Naive thymus-derived CD4-positive, alpha-beta T cell (primary cell): ENCODE measurements at regions of chr10 and their contacts with region 1.

Region 1: DNA sequence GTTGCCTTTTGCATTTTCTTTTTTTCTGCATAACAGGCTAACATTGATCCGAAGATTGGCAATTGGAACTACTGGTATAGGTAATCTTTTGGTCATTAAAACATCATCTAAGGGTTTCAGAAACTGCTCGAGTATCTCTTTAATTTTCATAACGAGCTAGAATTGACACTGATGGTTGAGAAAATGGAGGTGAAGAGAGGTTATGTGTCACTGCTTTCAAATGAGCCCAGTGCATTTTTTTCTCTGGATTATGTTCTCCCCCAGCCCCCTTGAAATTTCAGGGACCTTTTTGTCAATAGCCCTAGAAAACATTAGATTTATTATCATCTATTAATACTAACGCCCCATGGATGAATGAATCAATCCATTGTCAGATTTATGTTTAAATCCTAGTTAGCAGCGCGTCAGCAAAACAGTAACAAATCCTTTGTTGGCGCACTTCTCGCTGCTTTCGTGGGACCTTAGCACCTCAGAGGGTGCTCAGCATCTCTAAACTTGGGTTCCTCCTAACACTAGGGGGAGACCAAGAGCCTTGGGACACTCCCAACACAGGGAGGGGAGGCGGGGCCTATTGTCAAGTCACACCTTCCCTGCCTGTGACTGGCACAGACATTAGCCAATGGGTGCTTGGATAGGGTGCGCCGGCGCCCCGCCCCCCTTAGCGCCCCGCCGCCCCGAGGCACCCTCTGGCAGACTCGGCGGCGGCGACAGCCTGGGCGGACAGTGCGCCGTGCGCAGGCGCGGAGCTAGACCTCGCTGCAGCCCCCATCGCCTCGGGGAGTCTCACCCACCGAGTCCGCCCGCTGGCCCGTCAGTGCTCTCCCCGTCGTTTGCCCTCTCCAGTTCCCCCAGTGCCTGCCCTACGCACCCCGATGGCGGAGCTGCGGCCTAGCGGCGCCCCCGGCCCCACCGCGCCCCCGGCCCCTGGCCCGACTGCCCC is at the start of gene SUFU:
- DNase-seq: peak; percentile 91 to 99 (median 98)
- ATAC-seq: peak; percentile 85
- H3K4me3 ChIP-seq: peak within 1 kb of the TSS; percentile 92
- H3K4me3 Mint-ChIP-seq: no peak within 1 kb of the TSS
- H3K27ac ChIP-seq: peak within 1 kb of the TSS; percentile 88
- H3K27ac Mint-ChIP-seq: peak within 1 kb of the TSS in 7 of 9 donors; percentile 78 to 95 (median 83)
- H3K4me1 ChIP-seq: peaks cover 19 to 29% of the 10 kb centered on the region in 2 donors
- H3K4me1 Mint-ChIP-seq: peaks cover 22 to 49% (median 41%) of the 10 kb centered on the region in 7 donors
- H3K27me3 ChIP-seq: no peaks in the 10 kb centered on the region
- H3K27me3 Mint-ChIP-seq: no peaks in the 10 kb centered on the region
- total RNA-seq, gene SUFU: 10.7 to 17.5 (median 16.1) TPM

Region 2: DNA sequence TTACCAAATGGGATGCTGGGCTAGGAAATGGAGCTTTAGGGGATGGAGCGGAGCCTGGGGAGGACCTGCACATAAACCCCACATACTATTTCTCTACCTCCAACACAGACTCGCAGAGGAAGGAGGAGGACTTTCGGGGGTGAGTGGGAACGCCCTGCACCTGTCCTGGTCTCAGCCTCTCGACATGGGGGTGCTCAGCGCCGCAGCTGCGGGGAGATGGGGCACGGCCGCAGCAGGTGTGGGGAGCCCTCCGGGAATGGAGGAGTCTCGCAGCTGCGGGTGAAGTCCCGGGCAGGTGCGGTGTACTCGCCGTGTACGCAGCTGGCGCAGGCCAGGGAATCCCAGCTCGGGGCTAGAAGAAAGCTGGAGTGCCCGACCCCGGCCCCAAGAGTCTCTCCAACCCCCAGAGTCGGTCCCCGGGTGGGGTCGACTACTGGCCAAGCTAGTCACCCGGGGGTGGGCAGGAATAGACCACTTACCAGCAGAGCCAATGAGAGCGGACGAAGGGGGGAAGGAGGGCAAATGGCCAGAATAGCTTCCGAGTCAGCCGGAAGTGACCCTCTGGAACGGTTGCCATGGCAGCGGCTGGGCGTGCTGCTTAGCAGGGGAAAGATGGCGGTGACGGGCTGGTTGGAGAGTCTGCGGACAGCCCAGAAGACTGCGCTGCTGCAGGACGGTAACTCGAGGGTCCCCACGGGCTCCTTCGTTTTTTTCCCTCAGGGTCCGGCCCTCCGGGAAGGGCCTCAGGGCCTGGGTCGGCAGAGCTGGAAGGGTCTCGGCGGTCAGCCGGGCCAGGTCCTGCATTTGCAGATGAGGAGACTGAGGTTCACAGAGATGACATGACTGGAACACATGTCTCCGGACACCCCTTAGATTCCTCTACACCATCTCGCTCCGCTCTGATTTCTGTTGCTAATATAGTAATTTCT is 915.6 kb before region 1 on chr10 and contains the starts of genes DPCD and POLL:
- CTCF ChIA-PET with region 1: no interaction called
- POLR2A ChIA-PET with region 1: interaction called, 3 read pairs
- intact Hi-C with region 1: loop called in 1 of 2 experiments (anchors 2 kb)
- DNase-seq: peak; percentile 73 to 89 (median 81)
- ATAC-seq: peak; percentile 94
- H3K4me3 ChIP-seq: peak within 1 kb of the TSS; percentile 77
- H3K4me3 Mint-ChIP-seq: peak within 1 kb of the TSS; percentile 92 to 97 (median 95)
- H3K27ac ChIP-seq: peak within 1 kb of the TSS; percentile 69
- H3K27ac Mint-ChIP-seq: peak within 1 kb of the TSS; percentile 71 to 94 (median 89)
- H3K4me1 ChIP-seq: peaks cover 14 to 16% of the 10 kb centered on the region in 2 donors
- H3K4me1 Mint-ChIP-seq: peaks cover 16 to 37% (median 32%) of the 10 kb centered on the region in 7 donors
- H3K27me3 ChIP-seq: no peaks in the 10 kb centered on the region
- H3K27me3 Mint-ChIP-seq: no peaks in the 10 kb centered on the region
- total RNA-seq, gene DPCD: 0.64 to 3.6 (median 1.3) TPM
- total RNA-seq, gene POLL: 34.9 to 65.8 (median 38.8) TPM

Region 3: GRCh38 chr10:102114861-102115618 is 388.5 kb before region 1 on chr10:
- CTCF ChIA-PET with region 1: no interaction called
- POLR2A ChIA-PET with region 1: interaction called, 4 read pairs
- intact Hi-C with region 1: loop called (anchors 1 to 2 kb)
- DNase-seq: peak; percentile 61 to 83 (median 70)
- ATAC-seq: peak; percentile 86
- H3K4me3 ChIP-seq: peak overlapping the region; percentile 77
- H3K4me3 Mint-ChIP-seq: peak overlapping the region; percentile 84 to 97 (median 92)
- H3K27ac ChIP-seq: peak overlapping the region; percentile 97
- H3K27ac Mint-ChIP-seq: peak overlapping the region; percentile 80 to 98 (median 92)
- H3K4me1 ChIP-seq: peaks cover 49 to 58% of the 10 kb centered on the region in 2 donors
- H3K4me1 Mint-ChIP-seq: peaks cover 54 to 76% (median 67%) of the 10 kb centered on the region in 7 donors
- H3K27me3 ChIP-seq: no peaks in the 10 kb centered on the region
- H3K27me3 Mint-ChIP-seq: no peaks in the 10 kb centered on the region

Region 4: GRCh38 chr10:102235598-102235920 is 268.0 kb before region 1 on chr10:
- CTCF ChIA-PET with region 1: no interaction called
- POLR2A ChIA-PET with region 1: no interaction called
- intact Hi-C with region 1: no loop called
- DNase-seq: no peak
- ATAC-seq: no peak
- H3K4me3 ChIP-seq: no peak overlapping the region
- H3K4me3 Mint-ChIP-seq: no peak overlapping the region
- H3K27ac ChIP-seq: no peak overlapping the region
- H3K27ac Mint-ChIP-seq: no peak overlapping the region
- H3K4me1 ChIP-seq: peaks cover 0 to under 1% of the 10 kb centered on the region in 2 donors
- H3K4me1 Mint-ChIP-seq: peaks cover 0 to 8% (median 4%) of the 10 kb centered on the region in 7 donors
- H3K27me3 ChIP-seq: peaks cover 0 to 2% of the 10 kb centered on the region in 2 donors
- H3K27me3 Mint-ChIP-seq: peaks cover 27 to 74% (median 44%) of the 10 kb centered on the region in 5 donors

Region 5: DNA sequence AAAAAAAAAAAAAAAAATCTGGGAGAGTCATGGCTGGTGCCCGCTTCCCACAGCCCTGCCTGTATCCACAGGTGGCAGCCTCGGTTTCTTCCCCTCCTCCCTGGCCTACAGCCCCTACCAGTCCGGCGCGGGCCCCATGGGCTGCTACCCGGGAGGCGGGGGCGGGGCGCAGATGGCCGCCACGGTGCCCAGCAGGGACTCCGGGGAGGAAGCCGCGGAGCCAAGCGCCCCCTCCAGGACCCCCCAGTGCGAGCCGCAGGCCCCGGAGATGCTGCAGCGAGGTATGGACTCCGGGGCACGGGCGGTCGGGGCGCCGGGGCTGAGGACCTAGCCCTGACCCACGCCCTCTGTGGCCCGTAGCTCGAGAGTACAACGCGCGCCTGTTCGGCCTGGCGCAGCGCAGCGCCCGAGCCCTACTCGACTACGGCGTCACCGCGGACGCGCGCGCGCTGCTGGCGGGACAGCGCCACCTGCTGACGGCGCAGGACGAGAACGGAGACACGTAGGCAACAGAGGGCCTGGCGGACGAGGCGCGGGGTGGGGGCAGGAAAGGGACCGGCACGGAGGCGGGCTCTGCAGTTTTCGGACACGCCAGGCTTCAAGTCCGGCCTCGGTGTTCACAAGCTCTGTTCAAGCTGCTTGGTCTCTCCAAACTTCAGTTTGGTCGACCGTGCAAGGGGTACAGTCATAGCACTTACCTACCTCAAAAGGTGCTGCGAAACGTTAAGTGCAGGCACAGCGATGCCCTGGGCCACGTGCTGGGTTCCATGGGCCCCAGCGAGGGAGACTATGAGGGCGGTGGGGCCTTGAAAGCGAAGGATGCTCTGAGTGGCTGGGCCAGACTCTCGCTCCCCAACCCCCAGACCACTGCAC is 104.1 kb before region 1 on chr10:
- CTCF ChIA-PET with region 1: interaction called, 5 read pairs
- POLR2A ChIA-PET with region 1: interaction called, 12 read pairs
- intact Hi-C with region 1: loop called (anchors 1 kb)
- DNase-seq: peak; percentile 80 to 93 (median 88)
- ATAC-seq: peak; percentile 74
- H3K4me3 ChIP-seq: peak overlapping the region; percentile 56
- H3K4me3 Mint-ChIP-seq: peak overlapping the region; percentile 62 to 83 (median 76)
- H3K27ac ChIP-seq: peak overlapping the region; percentile 93
- H3K27ac Mint-ChIP-seq: peak overlapping the region; percentile 46 to 100 (median 88)
- H3K4me1 ChIP-seq: peaks cover 20 to 26% of the 10 kb centered on the region in 2 donors
- H3K4me1 Mint-ChIP-seq: peaks cover 15 to 42% (median 35%) of the 10 kb centered on the region in 7 donors
- H3K27me3 ChIP-seq: no peaks in the 10 kb centered on the region
- H3K27me3 Mint-ChIP-seq: no peaks in the 10 kb centered on the region

Region 6: DNA sequence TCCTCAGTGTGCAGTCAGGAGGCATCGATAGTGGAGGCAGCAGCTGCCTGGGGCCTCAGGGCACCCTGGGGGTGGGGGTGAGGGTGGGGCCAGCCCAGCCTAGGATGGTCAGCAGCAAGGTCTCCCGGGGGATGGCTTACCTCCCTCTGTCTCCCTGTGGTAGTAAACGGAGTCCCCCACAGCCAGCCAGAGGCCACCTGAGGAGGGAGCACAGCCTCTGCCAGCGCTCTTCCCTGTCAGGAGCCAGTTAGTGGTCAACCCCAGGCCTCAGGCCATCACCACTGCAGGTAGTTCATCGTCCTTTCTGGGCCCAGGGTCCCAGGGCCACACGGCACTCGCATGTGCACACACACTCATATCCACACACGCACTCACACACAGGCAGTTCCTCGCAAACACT is 23.2 kb before region 1 on chr10:
- CTCF ChIA-PET with region 1: no interaction called
- POLR2A ChIA-PET with region 1: interaction called, 3 read pairs
- intact Hi-C with region 1: loop called in 1 of 2 experiments (anchors 1 kb)
- DNase-seq: no peak
- ATAC-seq: no peak
- H3K4me3 ChIP-seq: no peak overlapping the region
- H3K4me3 Mint-ChIP-seq: no peak overlapping the region
- H3K27ac ChIP-seq: no peak overlapping the region
- H3K27ac Mint-ChIP-seq: no peak overlapping the region
- H3K4me1 ChIP-seq: peaks cover 0 to 4% of the 10 kb centered on the region in 2 donors
- H3K4me1 Mint-ChIP-seq: peaks cover 5 to 26% (median 15%) of the 10 kb centered on the region in 7 donors
- H3K27me3 ChIP-seq: no peaks in the 10 kb centered on the region
- H3K27me3 Mint-ChIP-seq: no peaks in the 10 kb centered on the region

Region 7: DNA sequence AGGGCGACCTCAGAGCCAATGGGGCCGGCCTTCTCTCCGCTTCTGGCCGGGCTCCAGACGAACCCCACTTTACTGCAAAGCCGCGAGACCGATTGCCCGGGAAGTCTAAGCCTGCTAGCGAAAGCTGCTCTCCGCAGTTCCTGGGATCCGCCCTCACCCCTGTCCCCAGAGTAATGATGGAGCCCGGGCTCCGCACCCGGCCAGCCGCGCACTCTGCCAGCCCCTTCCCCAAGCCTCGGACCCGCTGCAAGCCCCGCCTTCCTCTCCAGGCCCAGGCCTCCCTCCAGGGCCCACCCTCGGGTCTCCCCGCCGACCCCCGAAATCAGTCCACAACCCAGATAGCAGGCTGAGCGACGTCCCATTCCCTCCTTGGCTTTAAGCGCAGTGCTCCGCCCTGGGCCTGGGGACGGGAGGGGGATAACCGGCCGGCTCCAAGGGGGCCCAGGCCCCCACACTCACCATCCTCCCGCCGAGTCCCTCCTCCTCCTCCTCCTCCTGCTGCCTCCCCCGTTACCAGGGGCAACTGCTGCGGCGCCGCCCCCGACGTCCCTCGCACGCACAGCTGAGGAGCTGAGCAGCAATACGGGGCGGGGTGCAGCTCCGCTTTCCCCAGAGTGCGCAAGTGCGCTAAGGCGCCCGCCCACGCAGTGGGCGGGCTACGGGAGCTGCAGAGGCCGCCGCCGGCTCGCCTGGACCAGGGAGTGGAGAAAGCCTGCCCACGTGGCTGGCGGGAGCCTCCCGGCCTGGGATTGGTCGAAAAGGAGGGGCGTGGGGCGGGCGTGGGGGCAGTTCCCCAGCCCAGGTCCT is 210.5 kb after region 1 on chr10 and contains the start of gene ARL3:
- CTCF ChIA-PET with region 1: no interaction called
- POLR2A ChIA-PET with region 1: no interaction called
- intact Hi-C with region 1: loop called (anchors 1 kb)
- DNase-seq: peak; percentile 75 to 95 (median 89)
- ATAC-seq: peak; percentile 96
- H3K4me3 ChIP-seq: peak within 1 kb of the TSS; percentile 98
- H3K4me3 Mint-ChIP-seq: peak within 1 kb of the TSS; percentile 86 to 98 (median 94)
- H3K27ac ChIP-seq: peak within 1 kb of the TSS; percentile 92
- H3K27ac Mint-ChIP-seq: peak within 1 kb of the TSS; percentile 66 to 95 (median 90)
- H3K4me1 ChIP-seq: peaks cover 4 to 18% of the 10 kb centered on the region in 2 donors
- H3K4me1 Mint-ChIP-seq: peaks cover 26 to 52% (median 43%) of the 10 kb centered on the region in 7 donors
- H3K27me3 ChIP-seq: no peaks in the 10 kb centered on the region
- H3K27me3 Mint-ChIP-seq: no peaks in the 10 kb centered on the region
- total RNA-seq, gene ARL3: 1.3 to 5.1 (median 2.9) TPM

Region 8: DNA sequence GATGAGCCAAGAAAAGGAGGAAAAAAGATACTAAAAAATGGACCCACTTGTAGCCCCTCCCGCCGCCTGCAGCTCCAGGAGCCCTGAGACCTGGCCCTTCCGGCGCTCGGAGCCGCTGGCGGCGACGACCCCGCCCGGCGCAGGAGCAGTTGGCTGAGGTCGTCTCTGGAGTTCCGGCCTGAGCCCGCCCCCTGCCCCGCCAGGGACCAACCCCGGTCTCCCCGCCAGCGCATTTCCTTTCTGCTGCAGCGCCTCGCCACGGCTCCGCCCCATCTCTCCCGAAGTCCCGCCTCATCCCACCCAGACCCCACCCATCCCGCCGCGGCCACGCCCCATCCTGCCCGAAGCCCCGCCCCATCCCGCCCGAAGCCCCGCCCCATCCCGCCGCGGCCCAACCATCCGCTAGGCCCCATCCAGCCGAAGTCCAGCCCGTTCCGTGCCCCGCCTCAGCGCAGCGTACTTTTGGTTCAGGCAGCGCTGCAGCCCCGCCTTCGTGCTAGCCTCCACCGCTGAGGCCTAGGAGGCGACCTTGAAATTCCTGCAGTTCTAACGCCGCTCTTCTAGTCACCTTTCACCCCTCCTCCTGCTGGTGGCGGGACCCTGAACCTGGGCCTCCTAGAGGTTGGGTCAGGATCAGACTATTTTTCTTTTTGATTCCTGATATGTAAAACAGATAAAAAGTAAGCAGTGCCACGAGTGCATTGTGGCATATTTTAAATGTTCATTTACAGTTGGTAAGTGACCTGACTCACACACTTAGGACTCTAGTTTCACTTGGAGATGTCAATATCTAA is 1414.7 kb after region 1 on chr10 and contains the start of gene STN1:
- CTCF ChIA-PET with region 1: no interaction called
- POLR2A ChIA-PET with region 1: no interaction called
- intact Hi-C with region 1: loop called in 1 of 2 experiments (anchors 10 kb)
- DNase-seq: peak; percentile 81 to 95 (median 94)
- ATAC-seq: peak; percentile 97
- H3K4me3 ChIP-seq: peak within 1 kb of the TSS; percentile 89
- H3K4me3 Mint-ChIP-seq: peak within 1 kb of the TSS; percentile 88 to 99 (median 97)
- H3K27ac ChIP-seq: peak within 1 kb of the TSS; percentile 79
- H3K27ac Mint-ChIP-seq: peak within 1 kb of the TSS; percentile 95 to 99 (median 97)
- H3K4me1 ChIP-seq: peaks cover 28 to 31% of the 10 kb centered on the region in 2 donors
- H3K4me1 Mint-ChIP-seq: peaks cover 15 to 44% (median 38%) of the 10 kb centered on the region in 7 donors
- H3K27me3 ChIP-seq: no peaks in the 10 kb centered on the region
- H3K27me3 Mint-ChIP-seq: no peaks in the 10 kb centered on the region
- total RNA-seq, gene STN1: 28.8 to 42.6 (median 34.8) TPM